GM13976 (cell line): ENCODE measurements at regions of chr7 and their contacts with region 1.

Region 1: DNA sequence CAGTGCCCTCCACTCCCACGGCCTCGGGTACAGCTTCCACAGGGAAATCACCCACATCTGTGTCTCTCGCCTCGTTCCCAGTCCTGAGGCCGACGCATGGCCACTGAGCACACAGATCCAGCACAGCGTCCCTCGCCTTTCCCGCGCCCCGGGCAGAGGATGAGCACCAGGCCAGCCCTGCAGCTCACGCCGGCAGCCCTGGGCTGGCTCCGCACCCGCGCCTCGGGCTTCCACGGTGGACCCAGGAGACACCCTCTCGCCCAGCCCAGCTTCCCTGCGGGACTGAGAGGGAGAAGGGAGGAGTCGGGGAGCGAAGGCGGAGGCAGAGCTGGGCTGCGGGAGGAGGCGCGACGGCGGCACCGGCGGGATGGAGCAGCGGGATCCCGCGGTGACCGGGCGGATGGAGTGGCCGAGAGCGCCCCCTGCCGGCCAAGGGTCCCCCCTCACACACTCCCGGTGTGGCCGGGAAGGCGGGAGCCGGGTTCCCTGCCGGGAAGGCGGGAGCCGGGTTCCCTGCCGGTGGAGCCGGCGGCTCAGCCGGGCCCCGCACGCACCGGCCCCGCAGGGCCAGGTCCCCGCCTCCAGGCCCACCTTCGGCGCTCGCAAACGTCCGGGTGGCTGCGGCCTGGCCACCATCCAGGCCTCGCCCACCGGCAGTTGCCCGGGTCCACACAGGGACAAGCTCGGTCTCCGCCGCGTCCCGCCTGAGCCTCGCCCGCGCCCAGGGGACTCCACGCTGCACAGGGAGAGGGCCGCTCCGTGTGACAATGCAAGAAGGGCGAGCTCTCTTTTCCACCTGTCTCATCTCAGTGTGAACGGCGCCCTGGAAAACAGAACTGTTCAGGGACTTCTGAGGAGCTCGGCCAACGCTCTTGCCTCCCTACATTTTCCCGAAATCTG is 110.3 kb upstream of the LANCL2 start:
- DNase-seq: peak; percentile 90
- CTCF ChIP-seq: peak; percentile 75

Region 2: GRCh38 chr7:54773472-54774399 is 481.1 kb before region 1 on chr7:
- in situ Hi-C with region 1: loop called (anchors 5 kb)
- DNase-seq: peak; percentile 70
- CTCF ChIP-seq: peak; percentile 81

Region 3: GRCh38 chr7:55348499-55348898 is 93.7 kb after region 1 on chr7:
- in situ Hi-C with region 1: no loop called
- DNase-seq: no peak
- CTCF ChIP-seq: no peak

Region 4: GRCh38 chr7:55977831-55978230 is 723.0 kb after region 1 on chr7:
- in situ Hi-C with region 1: no loop called
- DNase-seq: no peak
- CTCF ChIP-seq: no peak